ENCODE measurements at regions of chr15 and their contacts with region 1.

Region 1: GRCh38 chr15:58146749-58147148 is 8.6 kb downstream of the AQP9 start:
- DNase-seq: peak; percentile 20
- H3K4me3 ChIP-seq: no peak overlapping the region
- H3K27ac ChIP-seq: no peak overlapping the region
- H3K4me1 ChIP-seq: no peaks in the 10 kb centered on the region
- H3K27me3 ChIP-seq: no peaks in the 10 kb centered on the region
- CTCF ChIP-seq: no peak

Region 2: GRCh38 chr15:58109419-58109818 is 37.3 kb before region 1 on chr15:
- CTCF ChIA-PET with region 1: no interaction called
- dilution Hi-C with region 1: loop called (anchors 5 kb)
- in situ Hi-C with region 1: no loop called
- intact Hi-C with region 1: no loop called
- DNase-seq: no peak
- H3K4me3 ChIP-seq: no peak overlapping the region
- H3K27ac ChIP-seq: no peak overlapping the region
- H3K4me1 ChIP-seq: no peaks in the 10 kb centered on the region
- H3K27me3 ChIP-seq: peaks cover 2% of the 10 kb centered on the region
- CTCF ChIP-seq: no peak